ENCODE measurements at regions of chr4 and their contacts with region 1.

Region 1: GRCh38 chr4:15396157-15396800 is 31.6 kb upstream of the C1QTNF7 start:
- DNase-seq: no peak
- H3K4me3 ChIP-seq: no peak overlapping the region
- H3K27ac ChIP-seq: peak overlapping the region; percentile 44 to 90
- H3K4me1 ChIP-seq: peaks cover 16 to 74% of the 10 kb centered on the region in 2 donors
- H3K27me3 ChIP-seq: no peaks in the 10 kb centered on the region
- CTCF ChIP-seq: peak in 2 of 3 experiments; percentile 49 to 56

Region 2: DNA sequence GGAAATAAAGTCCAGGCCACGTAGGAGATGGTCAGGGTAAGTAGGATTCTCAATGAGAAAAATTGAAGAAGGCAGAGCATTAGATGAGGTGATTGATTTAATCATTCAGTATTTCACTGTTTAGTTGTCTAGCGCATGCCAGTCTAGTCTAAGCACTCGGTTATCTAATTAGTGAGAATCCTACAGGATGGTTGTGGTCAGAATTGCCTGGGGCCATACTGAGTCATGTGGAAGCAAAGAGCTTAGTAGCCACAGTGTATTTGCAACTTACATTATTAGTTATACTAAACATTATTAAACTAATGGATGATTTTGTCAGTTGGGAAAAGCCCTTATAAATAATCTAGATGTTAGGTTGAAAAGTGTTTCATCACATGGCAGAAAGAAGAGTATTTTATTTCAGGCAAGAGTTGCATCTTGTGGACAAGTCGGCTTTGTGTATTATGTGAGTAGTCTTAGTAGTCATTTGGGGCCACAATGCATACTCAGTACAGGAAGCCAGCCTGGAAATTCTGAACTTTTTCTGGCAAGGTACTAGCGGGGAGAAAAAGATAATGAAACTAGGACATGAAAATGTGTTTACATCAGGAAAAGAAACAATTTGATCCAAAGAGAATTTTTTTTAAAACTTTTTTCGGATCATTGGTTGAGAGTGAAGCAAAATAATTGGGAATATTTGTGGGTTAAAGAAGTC is 362.1 kb before region 1 on chr4:
- intact Hi-C with region 1: loop called (anchors 5 kb)
- DNase-seq: no peak
- H3K4me3 ChIP-seq: peak overlapping the region; percentile 0 to 2
- H3K27ac ChIP-seq: peak overlapping the region; percentile 35 to 75
- H3K4me1 ChIP-seq: peaks cover 3 to 54% of the 10 kb centered on the region in 2 donors
- H3K27me3 ChIP-seq: no peaks in the 10 kb centered on the region
- CTCF ChIP-seq: no peak

Region 3: DNA sequence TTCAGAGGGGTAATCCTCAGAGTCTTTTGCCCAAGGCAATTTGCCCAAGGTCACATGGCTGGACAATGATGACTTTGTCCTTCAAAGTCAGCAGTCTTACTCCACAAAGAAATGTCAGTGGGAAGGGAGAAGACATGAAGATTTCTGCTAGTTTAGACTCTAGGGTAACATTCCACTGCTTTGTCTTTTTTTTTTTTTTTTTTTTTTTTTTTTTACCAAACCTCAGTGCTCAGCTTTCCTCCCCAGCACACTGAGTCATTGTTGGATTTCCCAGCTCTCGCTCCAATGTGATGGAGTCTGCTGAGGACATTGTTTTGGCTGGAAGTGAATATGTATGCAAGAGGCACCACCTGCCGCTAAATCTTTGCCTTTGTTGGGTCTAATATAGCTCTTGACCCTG is 24.4 kb after region 1 on chr4:
- intact Hi-C with region 1: loop called (anchors 2 kb)
- DNase-seq: no peak
- H3K4me3 ChIP-seq: no peak overlapping the region
- H3K27ac ChIP-seq: peak overlapping the region; percentile 67 to 77
- H3K4me1 ChIP-seq: peaks cover 10 to 77% of the 10 kb centered on the region in 2 donors
- H3K27me3 ChIP-seq: no peaks in the 10 kb centered on the region
- CTCF ChIP-seq: peak in 1 of 3 experiments; percentile 18

Measured in ascending aorta (tissue), 2 donors.